Astrocyte of the cerebellum (primary cell): ENCODE measurements at regions of chr16 and their contacts with region 1.

Region 1: DNA sequence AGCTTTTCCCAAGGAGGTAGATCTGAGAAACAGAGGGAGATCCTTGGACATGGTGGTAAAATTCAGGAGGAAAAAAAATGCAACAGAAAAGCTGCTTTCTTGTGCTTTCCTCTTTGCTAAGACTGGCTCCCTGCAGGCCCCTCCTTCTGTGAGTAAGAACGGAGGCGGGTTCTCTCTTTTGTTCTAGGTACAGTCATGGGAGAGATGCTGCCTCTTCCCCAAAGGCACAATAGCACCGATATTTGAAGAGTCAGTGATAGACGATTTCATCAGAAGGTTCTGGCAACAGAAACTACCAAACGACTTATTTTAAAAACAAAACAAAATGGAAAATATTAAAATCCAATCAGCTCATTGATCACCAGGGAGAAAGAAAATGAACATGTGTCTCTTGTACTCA is 32.6 kb upstream of the KIFC3 start:
- DNase-seq: no peak
- H3K4me3 ChIP-seq: no peak overlapping the region
- CTCF ChIP-seq: no peak

Region 2: GRCh38 chr16:57775661-57776469 is 59.1 kb before region 1 on chr16:
- in situ Hi-C with region 1: no loop called
- DNase-seq: no peak
- H3K4me3 ChIP-seq: no peak overlapping the region
- CTCF ChIP-seq: peak; percentile 47

Region 3: DNA sequence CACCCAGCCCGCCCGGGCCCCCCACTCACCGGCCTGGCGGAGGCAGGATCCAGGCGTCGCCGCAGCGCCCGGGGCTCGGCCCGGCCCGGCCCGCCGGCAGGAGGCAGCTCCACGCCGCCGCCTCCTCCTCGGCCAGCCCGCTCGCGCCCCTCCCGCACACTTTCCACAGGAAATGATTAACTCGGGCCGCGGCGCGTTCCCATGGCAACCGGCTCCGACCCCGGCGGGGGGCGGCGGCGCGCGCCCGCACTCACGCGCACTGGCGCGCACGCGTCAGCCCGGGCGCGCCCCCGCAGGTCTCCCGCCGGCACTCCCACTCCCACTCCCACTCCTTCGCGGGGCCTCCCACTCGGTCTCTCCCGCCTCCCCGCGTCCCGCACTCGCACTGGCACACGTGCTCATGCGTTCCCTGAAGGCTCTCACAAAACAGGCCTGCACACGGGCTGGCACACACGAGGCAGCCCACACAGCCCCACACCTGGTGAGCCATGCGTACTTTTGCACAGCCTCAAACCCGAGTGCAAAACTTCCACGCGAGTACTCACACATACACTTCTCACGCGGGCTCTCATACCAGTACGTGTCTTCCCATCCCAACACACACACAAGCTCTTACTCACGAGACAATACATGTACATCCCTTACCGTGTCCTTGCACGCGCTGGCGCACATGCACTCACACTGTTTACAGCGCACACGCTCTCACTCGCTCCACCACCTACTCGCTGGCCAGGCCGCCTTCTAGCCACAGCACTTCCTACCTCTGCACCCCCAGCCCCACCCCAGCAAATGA is 32.4 kb before region 1 on chr16 and contains the start of gene KIFC3:
- in situ Hi-C with region 1: no loop called
- DNase-seq: no peak
- H3K4me3 ChIP-seq: peak within 1 kb of the TSS; percentile 68
- CTCF ChIP-seq: no peak

Region 4: GRCh38 chr16:57871456-57871855 is 36.5 kb after region 1 on chr16:
- in situ Hi-C with region 1: loop called (anchors 5 kb)
- DNase-seq: no peak
- H3K4me3 ChIP-seq: no peak overlapping the region
- CTCF ChIP-seq: no peak

Region 5: GRCh38 chr16:57906382-57907316 is 71.7 kb after region 1 on chr16:
- in situ Hi-C with region 1: no loop called
- DNase-seq: no peak
- H3K4me3 ChIP-seq: no peak overlapping the region
- CTCF ChIP-seq: peak; percentile 64